ENCODE measurements at regions of chr11 and their contacts with region 1.

Region 1: DNA sequence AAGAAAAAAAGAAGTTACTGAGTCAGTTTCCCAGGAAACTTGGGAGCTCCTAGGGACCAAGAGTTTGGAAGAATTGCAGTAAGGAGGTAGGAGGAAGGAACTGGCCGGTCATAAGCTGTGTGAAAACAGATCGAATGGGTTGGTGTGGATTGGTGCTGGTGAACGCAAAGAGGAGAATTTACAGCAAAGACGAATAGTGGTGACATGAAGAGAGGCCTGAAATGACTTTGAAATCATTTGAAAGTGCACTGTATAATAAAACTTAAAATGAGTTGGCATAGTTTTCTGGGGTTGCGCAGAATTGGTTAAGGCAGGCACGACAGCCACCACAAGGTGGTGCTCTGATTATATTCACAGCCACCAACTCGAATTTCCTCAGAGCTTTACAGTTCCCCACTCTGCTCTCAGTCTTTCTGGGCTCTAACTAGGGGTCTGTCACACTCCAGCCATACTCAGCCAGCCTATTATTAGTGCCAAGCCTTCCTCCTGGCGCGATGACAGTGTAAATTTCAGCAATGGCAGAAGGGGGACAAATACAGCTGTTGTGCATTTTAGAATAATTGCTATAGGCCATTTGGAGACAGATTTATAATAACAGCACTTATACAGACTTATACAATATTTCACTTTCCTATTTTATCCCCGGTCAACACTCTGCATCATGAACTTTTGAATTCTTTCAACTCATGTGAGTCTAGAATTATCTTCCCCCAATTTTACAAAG is 8.3 kb upstream of the HTR3B start:
- DNase-seq: peak in 12 of 14 experiments; percentile 5 to 67 (median 22)
- ATAC-seq: peak; percentile 48
- H3K4me3 ChIP-seq: no peak overlapping the region
- H3K4me3 Mint-ChIP-seq: no peak overlapping the region
- H3K27ac ChIP-seq: no peak overlapping the region
- H3K27ac Mint-ChIP-seq: no peak overlapping the region
- H3K4me1 ChIP-seq: no peaks in the 10 kb centered on the region
- H3K4me1 Mint-ChIP-seq: no peaks in the 10 kb centered on the region
- H3K27me3 ChIP-seq: no peaks in the 10 kb centered on the region
- H3K27me3 Mint-ChIP-seq: no peaks in the 10 kb centered on the region
- CTCF ChIP-seq: peak; percentile 62

Region 2: GRCh38 chr11:113994077-113994954 is 98.0 kb after region 1 on chr11:
- CTCF ChIA-PET with region 1: interaction called, 3 read pairs
- POLR2A ChIA-PET with region 1: no interaction called
- intact Hi-C with region 1: loop called in 1 of 2 experiments (anchors 2 kb)
- DNase-seq: peak; percentile 8 to 61 (median 28)
- ATAC-seq: no peak
- H3K4me3 ChIP-seq: no peak overlapping the region
- H3K4me3 Mint-ChIP-seq: no peak overlapping the region
- H3K27ac ChIP-seq: no peak overlapping the region
- H3K27ac Mint-ChIP-seq: no peak overlapping the region
- H3K4me1 ChIP-seq: peaks cover 8% of the 10 kb centered on the region
- H3K4me1 Mint-ChIP-seq: no peaks in the 10 kb centered on the region
- H3K27me3 ChIP-seq: peaks cover 8 to 11% of the 10 kb centered on the region in 2 experiments
- H3K27me3 Mint-ChIP-seq: peaks cover 35% of the 10 kb centered on the region
- CTCF ChIP-seq: peak; percentile 77

Region 3: GRCh38 chr11:114036156-114036811 is 140.0 kb after region 1 on chr11:
- CTCF ChIA-PET with region 1: interaction called, 3 read pairs
- POLR2A ChIA-PET with region 1: no interaction called
- intact Hi-C with region 1: loop called in 1 of 2 experiments (anchors 2 kb)
- DNase-seq: peak; percentile 22 to 74 (median 49)
- ATAC-seq: peak; percentile 56
- H3K4me3 ChIP-seq: peak overlapping the region; percentile 19
- H3K4me3 Mint-ChIP-seq: no peak overlapping the region
- H3K27ac ChIP-seq: no peak overlapping the region
- H3K27ac Mint-ChIP-seq: no peak overlapping the region
- H3K4me1 ChIP-seq: peaks cover 10% of the 10 kb centered on the region
- H3K4me1 Mint-ChIP-seq: no peaks in the 10 kb centered on the region
- H3K27me3 ChIP-seq: peaks cover 0 to 3% of the 10 kb centered on the region in 2 experiments
- H3K27me3 Mint-ChIP-seq: no peaks in the 10 kb centered on the region
- CTCF ChIP-seq: peak; percentile 74

Region 4: DNA sequence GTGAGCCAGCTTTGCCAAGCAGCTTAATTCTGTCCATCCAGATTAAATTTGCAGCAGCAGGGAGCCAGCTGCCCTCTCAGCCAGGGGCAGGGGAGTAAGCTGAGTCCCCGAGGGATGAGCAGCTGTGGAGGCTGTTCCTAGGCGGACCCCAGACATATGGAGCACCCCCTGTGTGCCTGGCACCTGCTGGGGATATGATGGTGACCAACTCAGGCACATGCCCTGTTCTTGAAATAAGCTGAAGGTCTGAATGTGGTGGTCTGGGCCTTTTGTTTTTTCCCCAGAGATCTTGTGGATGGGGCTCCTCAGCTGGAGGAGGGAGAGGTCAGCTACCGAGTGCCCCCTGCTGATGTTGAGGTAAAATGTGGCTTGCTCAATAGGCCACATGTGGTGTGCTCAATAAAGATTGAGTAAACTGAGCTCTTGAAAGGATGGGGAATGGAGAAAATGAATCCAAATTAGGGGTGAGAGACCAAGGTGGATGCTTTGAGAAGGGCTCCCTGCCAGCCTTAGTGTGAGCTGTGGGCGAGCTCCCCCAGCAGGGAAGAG is 296.6 kb after region 1 on chr11:
- CTCF ChIA-PET with region 1: no interaction called
- POLR2A ChIA-PET with region 1: no interaction called
- intact Hi-C with region 1: loop called (anchors 1 kb)
- DNase-seq: peak in 2 of 14 experiments; percentile 26 to 27
- ATAC-seq: no peak
- H3K4me3 ChIP-seq: no peak overlapping the region
- H3K4me3 Mint-ChIP-seq: no peak overlapping the region
- H3K27ac ChIP-seq: no peak overlapping the region
- H3K27ac Mint-ChIP-seq: no peak overlapping the region
- H3K4me1 ChIP-seq: peaks cover 19% of the 10 kb centered on the region
- H3K4me1 Mint-ChIP-seq: peaks cover 47% of the 10 kb centered on the region
- H3K27me3 ChIP-seq: no peaks in the 10 kb centered on the region
- H3K27me3 Mint-ChIP-seq: no peaks in the 10 kb centered on the region
- CTCF ChIP-seq: no peak

Measured in CD4-positive, alpha-beta T cell (primary cell).